Heart right ventricle (tissue), 16 donors: ENCODE measurements at regions of chr6 and their contacts with region 1.

Region 1: DNA sequence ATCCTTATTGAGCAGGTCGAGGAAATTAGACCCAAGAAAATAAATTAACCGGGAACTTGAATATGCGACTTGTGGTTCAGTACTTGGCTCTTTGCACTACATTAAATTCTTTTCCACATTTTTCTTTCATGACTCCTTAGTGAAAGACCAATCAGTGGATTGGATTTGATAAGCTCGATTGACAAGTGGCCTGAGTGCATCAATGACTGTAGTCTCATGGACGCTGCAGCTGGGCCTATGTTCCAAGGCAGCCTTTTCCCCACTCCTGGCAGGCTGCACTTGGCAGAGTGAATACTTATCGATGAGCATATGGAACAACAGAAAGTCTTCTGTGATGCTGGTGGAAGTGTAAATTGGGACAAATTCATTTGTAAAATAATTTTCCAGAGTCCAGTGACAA is 210.8 kb upstream of the EXOC2 start:
- DNase-seq: no peak
- ATAC-seq: no peak
- H3K4me3 ChIP-seq: no peak overlapping the region
- H3K27ac ChIP-seq: no peak overlapping the region
- H3K4me1 ChIP-seq: peaks cover 0 to 9% (median 0%) of the 10 kb centered on the region in 9 donors
- H3K27me3 ChIP-seq: peaks cover 0 to 26% (median 2%) of the 10 kb centered on the region in 7 donors
- CTCF ChIP-seq: no peak

Region 2: DNA sequence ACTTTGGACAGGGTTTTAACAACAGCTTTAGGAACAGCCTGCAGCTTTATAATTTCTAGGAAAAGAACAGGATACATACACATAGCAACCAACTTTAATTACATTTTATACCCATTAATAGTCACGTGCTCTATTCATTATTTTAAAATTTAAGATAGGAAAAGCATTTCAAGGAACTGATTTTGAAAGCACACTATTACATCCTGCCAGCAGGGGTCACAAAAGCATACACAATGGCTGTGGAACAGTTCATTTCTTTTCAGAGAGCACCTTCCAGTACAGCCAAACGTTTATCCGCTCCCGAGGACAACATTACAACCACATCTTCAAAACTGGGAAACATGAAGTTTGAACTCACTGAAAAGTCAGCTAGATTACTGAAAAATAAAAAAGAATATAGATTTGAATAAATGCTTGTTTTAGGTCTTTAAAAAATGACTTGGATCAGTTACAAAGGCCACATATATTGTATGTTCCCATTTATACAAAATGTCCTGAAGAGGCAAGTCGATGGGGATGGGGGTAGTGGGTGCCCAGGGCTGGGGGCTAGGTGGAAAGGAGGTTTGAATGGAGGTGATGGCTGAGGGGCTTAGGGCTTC is 106.2 kb before region 1 on chr6:
- intact Hi-C with region 1: loop called in 2 of 10 experiments (anchors 10 kb)
- DNase-seq: peak in 1 of 2 donors; percentile 55
- ATAC-seq: peak in 3 of 8 donors; percentile 41 to 64 (median 53)
- H3K4me3 ChIP-seq: no peak overlapping the region
- H3K27ac ChIP-seq: no peak overlapping the region
- H3K4me1 ChIP-seq: no peaks in the 10 kb centered on the region
- H3K27me3 ChIP-seq: peaks cover 0 to 92% (median 83%) of the 10 kb centered on the region in 7 donors
- CTCF ChIP-seq: peak; percentile 60 to 89 (median 80)

Region 3: DNA sequence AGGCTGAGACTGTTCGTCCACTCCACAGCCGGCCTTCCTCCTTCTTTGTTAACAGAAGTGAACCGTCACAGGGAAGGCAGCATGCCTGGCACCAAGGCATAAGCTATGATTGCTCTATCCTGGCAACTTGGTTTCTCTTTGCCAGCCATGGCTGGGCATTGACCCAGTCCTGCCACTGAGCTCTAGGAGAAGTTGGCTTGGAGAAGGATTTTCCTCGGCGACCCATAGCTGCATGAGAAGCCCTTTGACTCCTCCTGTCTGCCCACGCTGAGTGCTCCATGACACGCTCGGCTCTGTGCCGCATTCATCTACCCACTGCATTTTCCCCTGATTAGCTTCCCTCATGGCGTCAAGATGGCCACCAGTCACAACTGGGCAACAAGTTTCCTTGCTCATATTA is 99.0 kb before region 1 on chr6:
- intact Hi-C with region 1: loop called in 2 of 10 experiments (anchors 10 kb)
- DNase-seq: no peak
- ATAC-seq: no peak
- H3K4me3 ChIP-seq: no peak overlapping the region
- H3K27ac ChIP-seq: no peak overlapping the region
- H3K4me1 ChIP-seq: no peaks in the 10 kb centered on the region
- H3K27me3 ChIP-seq: peaks cover 0 to 49% (median 23%) of the 10 kb centered on the region in 7 donors
- CTCF ChIP-seq: no peak